Heart right ventricle (tissue), 16 donors: ENCODE measurements at regions of chr17 and their contacts with region 1.

Region 1: GRCh38 chr17:28576758-28577465 is at the start of gene ALDOC:
- DNase-seq: peak; percentile 95 to 98
- ATAC-seq: peak; percentile 88 to 96 (median 92)
- H3K4me3 ChIP-seq: peak within 1 kb of the TSS in 9 of 10 donors; percentile 14 to 56 (median 49)
- H3K27ac ChIP-seq: peak within 1 kb of the TSS in 9 of 10 donors; percentile 53 to 78 (median 62)
- H3K4me1 ChIP-seq: peaks cover 5 to 47% (median 34%) of the 10 kb centered on the region in 9 donors
- H3K27me3 ChIP-seq: no peaks in the 10 kb centered on the region
- CTCF ChIP-seq: no peak
- total RNA-seq, gene ALDOC: 196 to 416 (median 291) TPM

Region 2: DNA sequence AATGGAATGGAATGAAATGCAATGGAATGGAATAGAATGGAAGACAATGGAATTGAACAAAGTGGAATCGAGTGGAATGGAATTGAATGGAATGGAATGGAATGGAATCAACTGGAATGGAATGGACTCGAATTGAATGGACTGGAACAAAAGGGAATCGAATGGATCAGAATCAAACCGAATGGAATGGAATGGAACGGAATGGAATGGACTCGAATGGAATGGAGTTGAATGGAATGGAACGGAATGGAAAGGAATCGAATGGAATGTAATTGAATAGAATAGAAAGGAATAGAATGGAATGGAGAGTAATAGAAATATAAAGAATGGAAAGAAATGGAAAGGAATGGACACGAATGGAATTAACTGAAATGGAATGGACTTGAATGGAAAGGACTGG is 1758.2 kb before region 1 on chr17:
- intact Hi-C with region 1: no loop called
- DNase-seq: no peak
- ATAC-seq: no peak
- H3K4me3 ChIP-seq: no peak overlapping the region
- H3K27ac ChIP-seq: no peak overlapping the region
- H3K4me1 ChIP-seq: no peaks in the 10 kb centered on the region
- H3K27me3 ChIP-seq: no peaks in the 10 kb centered on the region
- CTCF ChIP-seq: no peak

Region 3: GRCh38 chr17:28598799-28599310 is 21.9 kb after region 1 on chr17 and contains the start of gene SPAG5:
- intact Hi-C with region 1: loop called in 1 of 10 experiments (anchors 2 kb)
- DNase-seq: peak; percentile 91 to 92
- ATAC-seq: peak; percentile 98 to 100 (median 99)
- H3K4me3 ChIP-seq: peak within 1 kb of the TSS; percentile 26 to 80 (median 67)
- H3K27ac ChIP-seq: peak within 1 kb of the TSS; percentile 21 to 97 (median 87)
- H3K4me1 ChIP-seq: peaks cover 0 to 22% (median 13%) of the 10 kb centered on the region in 9 donors
- H3K27me3 ChIP-seq: no peaks in the 10 kb centered on the region
- CTCF ChIP-seq: no peak
- total RNA-seq, gene SPAG5: 0.55 to 6.5 (median 1.2) TPM